Activated CD4-positive, alpha-beta T cell treated with anti-CD3 and anti-CD28 coated beads for 36 hours (primary cell): ENCODE measurements at regions of chr12 and their contacts with region 1.

Region 1: DNA sequence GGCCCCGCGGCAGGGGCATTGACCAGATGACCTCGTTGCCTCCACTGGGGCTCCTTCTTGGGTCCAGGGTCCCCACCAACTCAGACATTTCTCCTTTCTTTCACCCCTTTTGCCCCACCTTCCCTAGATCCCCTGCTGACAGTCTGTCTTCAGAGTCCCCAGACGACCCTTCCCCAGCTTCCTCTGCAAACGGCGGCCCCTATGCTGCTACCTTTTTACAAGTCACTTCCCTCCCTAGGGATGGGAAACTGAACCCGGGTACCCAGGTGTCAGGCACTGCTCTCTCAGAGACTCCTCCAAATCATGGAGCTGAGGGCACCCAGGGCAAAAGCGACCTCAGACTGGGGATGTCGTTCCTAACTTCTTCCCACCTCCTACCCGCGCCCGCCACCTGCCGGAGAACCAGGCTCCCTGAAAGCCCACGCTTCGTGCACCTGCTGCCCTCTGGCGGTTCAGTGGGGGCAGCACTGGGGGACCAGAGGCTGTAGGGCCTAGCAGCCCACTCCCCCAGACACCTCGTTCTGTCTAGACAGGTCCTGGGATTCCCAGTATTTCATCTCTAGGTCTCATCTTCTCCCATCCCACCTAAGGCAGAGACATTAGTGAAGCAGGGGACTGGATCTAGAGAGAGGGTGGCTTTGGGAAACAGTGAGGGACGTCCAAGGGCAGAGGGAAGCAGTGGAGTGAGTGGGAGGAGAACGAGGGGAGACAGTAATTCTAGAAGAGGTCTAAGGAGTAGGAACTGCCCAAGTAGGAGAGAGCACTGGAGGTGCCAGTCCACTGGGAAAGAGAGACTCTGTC is 4.9 kb downstream of the ZNF385A start:
- DNase-seq: peak; percentile 96
- ATAC-seq: peak; percentile 86
- H3K4me3 Mint-ChIP-seq: peak overlapping the region; percentile 47
- H3K27ac Mint-ChIP-seq: no peak overlapping the region
- H3K4me1 Mint-ChIP-seq: peaks cover 10% of the 10 kb centered on the region
- H3K27me3 Mint-ChIP-seq: no peaks in the 10 kb centered on the region

Region 2: DNA sequence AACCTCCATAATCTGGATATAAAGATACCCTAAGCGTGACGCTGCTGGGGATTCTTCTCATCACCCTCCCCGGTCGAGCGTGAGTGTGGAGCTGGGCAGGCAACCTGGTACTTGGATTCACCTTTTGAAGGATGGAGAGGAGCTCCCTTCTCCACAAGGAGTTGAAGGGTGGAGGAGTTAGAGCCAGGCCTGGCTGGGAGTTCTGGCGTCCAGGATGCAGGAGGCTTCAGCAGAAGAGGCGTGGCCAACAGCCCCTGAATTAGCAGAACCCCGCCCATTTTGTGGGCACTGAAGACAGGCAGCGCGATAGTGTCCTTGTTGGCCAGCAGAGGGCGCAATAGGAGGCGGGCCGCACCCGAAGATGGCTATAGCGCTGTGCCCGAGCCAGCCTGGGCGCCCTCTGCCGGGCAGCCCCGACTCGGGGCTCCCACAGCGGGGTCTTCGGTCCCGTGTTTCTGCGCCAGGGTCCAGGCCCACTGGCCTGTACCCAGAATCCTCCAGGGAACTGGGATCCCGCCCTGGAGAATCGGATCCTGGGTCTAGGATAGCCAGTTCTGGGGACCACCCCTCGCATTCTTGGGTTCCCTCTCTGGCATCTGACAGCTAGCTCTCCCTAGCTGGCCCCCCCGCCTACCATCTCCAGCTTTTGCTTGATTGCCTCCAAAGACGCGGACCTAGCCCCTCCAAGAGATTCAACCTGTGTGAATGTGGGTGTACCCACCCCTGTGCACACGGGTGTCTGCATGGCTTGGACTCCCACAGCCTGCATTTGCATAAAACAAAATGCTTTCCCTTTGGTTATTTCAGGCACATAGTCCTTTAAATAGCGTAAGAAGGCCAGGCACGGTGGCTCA is 164.8 kb before region 1 on chr12:
- CTCF ChIA-PET with region 1: interaction called, 17 read pairs
- POLR2A ChIA-PET with region 1: no interaction called
- intact Hi-C with region 1: no loop called
- DNase-seq: peak; percentile 97
- ATAC-seq: peak; percentile 92
- H3K4me3 Mint-ChIP-seq: peak overlapping the region; percentile 63
- H3K27ac Mint-ChIP-seq: no peak overlapping the region
- H3K4me1 Mint-ChIP-seq: peaks cover 26% of the 10 kb centered on the region
- H3K27me3 Mint-ChIP-seq: peaks cover 15% of the 10 kb centered on the region

Region 3: DNA sequence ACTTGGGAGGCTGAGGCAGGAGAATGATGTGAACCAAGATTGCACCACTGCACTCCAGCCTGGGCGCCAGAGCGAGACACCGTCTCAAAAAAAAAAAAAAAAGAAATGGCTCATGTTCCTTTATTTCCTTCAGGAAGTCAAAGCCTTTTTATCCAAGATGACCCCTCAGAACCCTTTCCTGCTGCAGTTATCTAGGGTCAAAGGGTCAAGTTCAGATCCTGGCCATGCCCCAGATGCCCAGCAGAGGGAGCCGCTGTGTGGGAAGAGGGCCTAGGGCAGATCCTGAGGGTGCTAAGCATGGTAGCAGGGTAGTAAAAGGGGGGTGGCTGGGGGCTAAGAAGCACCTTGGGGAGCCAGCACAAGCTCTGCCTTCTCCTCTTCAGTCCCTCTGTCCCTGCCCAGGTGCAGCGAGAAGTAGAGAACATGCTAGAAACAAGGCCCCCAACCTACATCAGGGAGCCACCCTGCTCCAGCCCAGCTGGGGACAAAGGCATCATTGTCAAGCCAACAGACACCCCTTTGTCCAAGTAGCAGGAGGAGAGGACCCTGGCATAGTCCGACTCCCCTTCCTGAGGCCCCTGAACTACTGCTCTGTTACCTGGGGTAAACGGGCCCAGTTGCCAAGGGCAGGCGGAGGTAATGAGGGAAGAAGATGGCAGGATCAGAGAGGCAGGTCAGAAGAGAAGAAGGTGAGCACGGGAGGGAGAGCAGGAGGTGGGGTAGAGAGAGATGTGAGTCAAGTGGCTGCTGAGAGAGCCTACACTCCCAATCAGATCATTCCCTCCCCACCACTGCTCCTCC is 85.2 kb before region 1 on chr12:
- CTCF ChIA-PET with region 1: interaction called, 62 read pairs
- POLR2A ChIA-PET with region 1: no interaction called
- intact Hi-C with region 1: loop called in 1 of 2 experiments (anchors 1 kb)
- DNase-seq: peak; percentile 83
- ATAC-seq: peak; percentile 82
- H3K4me3 Mint-ChIP-seq: no peak overlapping the region
- H3K27ac Mint-ChIP-seq: no peak overlapping the region
- H3K4me1 Mint-ChIP-seq: peaks cover 5% of the 10 kb centered on the region
- H3K27me3 Mint-ChIP-seq: peaks cover 10% of the 10 kb centered on the region

Region 4: GRCh38 chr12:54337280-54337842 is 42.2 kb before region 1 on chr12:
- CTCF ChIA-PET with region 1: interaction called, 16 read pairs
- POLR2A ChIA-PET with region 1: no interaction called
- intact Hi-C with region 1: no loop called
- DNase-seq: no peak
- ATAC-seq: no peak
- H3K4me3 Mint-ChIP-seq: no peak overlapping the region
- H3K27ac Mint-ChIP-seq: no peak overlapping the region
- H3K4me1 Mint-ChIP-seq: peaks cover 13% of the 10 kb centered on the region
- H3K27me3 Mint-ChIP-seq: no peaks in the 10 kb centered on the region

Region 5: DNA sequence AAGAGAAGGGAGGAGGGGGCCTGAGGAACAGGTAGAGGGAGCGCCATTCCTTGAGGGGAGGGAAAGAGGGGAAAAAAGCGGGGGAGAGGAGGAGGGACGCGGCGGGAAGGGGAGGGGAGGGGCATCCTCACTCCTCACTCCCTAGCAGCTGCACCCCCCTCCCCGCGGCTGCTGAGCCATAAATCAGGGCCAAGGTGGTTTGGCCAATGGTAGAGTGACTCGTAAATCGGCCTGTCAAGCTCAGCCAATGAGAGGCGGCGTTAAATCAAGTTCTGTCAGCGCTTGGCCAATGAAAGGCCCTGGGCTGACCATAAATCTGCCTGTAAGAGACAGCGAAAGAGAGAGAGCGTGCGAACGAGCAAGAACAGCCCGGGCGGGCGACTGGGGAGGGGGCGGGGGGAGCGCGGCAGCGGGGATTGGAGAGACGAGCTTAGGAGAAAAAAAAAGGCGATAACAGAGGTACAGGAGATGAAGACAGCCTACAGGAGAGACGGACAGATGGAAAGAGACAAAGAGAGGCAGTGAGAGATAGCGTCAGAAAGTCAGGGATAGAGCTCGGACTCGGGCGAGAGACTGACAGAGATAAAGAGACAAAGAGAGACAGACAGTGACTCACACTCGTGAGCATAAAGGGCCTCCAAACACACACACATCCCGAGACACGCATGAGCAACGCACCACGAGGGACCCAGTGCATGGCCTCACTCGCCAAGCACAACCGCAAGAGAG is 20.4 kb before region 1 on chr12:
- CTCF ChIA-PET with region 1: interaction called, 16 read pairs
- POLR2A ChIA-PET with region 1: interaction called, 5 read pairs
- intact Hi-C with region 1: no loop called
- DNase-seq: peak; percentile 96
- ATAC-seq: peak; percentile 93
- H3K4me3 Mint-ChIP-seq: no peak overlapping the region
- H3K27ac Mint-ChIP-seq: no peak overlapping the region
- H3K4me1 Mint-ChIP-seq: peaks cover 18% of the 10 kb centered on the region
- H3K27me3 Mint-ChIP-seq: no peaks in the 10 kb centered on the region

Region 6: GRCh38 chr12:54398995-54399793 is 19.6 kb after region 1 on chr12:
- CTCF ChIA-PET with region 1: interaction called, 33 read pairs
- POLR2A ChIA-PET with region 1: no interaction called
- intact Hi-C with region 1: no loop called
- DNase-seq: peak; percentile 92
- ATAC-seq: peak; percentile 95
- H3K4me3 Mint-ChIP-seq: no peak overlapping the region
- H3K27ac Mint-ChIP-seq: no peak overlapping the region
- H3K4me1 Mint-ChIP-seq: peaks cover 6% of the 10 kb centered on the region
- H3K27me3 Mint-ChIP-seq: no peaks in the 10 kb centered on the region

Region 7: DNA sequence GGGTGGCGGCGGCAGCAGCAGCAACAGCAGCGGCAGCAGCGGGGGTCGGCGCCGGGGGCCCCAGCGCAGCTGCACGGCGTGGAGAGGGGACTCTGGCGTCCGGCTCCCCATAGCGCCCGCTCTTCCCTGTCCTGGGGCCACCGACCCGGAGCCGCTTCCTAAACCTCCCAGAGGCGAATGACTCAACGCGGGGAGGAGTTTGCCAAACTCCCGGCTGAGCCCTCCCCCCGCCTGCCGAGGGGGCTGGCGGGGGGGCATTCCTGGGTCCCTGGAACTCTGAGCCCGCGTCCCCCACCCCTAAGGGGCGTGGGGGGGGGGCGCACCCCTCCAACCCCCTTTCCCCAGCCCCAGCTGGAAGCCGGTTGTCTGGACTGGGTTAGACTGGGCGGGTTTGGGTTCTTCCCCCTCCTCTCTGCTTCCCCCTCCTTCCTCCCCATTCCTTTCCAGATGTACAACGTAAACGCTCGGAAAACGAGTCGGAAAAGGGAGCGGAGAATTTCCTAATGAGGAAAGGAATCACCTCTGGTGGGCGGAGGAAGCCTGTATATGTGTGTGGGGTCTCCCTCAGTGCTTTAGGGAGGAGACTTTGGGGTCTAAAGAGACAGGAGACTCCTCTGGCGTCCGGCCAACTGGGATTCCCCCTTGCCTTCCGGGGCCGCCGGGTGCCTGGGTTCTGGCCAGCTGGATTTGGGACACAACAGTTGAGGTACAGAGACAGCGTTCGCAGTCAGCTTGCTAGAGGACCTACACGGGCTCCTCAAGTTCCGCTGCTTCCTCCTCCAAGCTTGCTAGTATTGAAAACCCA is 39.7 kb after region 1 on chr12 and contains the start of gene ITGA5:
- CTCF ChIA-PET with region 1: interaction called, 17 read pairs
- POLR2A ChIA-PET with region 1: no interaction called
- intact Hi-C with region 1: no loop called
- DNase-seq: peak; percentile 66
- ATAC-seq: peak; percentile 42
- H3K4me3 Mint-ChIP-seq: peak within 1 kb of the TSS; percentile 96
- H3K27ac Mint-ChIP-seq: peak within 1 kb of the TSS; percentile 95
- H3K4me1 Mint-ChIP-seq: peaks cover 42% of the 10 kb centered on the region
- H3K27me3 Mint-ChIP-seq: no peaks in the 10 kb centered on the region
- total RNA-seq, gene ITGA5: 38.6 to 58.0 TPM